ENCODE measurements at regions of chr3 and their contacts with region 1.

Region 1: DNA sequence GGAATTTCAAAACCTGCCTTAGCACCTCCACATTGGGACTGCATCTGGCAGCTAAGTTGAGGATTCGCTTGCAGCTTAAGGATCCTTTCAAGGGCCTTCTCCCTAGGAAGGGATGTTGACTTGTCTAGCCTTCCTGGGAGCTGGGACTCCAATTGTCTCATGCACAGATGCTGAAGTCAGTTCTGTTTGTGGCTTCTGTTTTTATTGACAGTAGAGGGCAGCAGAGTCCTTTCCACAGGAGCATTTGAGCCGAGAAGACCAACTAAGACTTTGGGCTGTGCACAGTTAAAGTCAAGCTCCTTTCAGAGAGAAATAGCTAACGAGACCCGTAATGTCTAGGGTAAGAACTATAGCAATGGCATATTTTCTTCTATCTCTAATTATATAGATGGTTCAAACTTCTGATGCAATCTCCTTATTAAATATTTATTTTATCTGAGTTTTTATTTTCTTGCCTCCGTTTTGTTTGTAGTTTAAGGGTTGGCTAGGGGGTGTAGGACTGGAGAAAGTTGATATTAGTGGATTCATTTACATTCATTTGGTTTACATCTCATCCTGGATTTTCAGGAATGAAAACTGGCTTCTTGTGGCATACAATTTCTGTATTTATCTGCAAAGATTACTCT is 59.7 kb upstream of the KBTBD8 start:
- DNase-seq: peak; percentile 48
- H3K4me3 Mint-ChIP-seq: no peak overlapping the region
- H3K27ac Mint-ChIP-seq: no peak overlapping the region
- H3K4me1 Mint-ChIP-seq: no peaks in the 10 kb centered on the region
- H3K27me3 Mint-ChIP-seq: peaks cover 7% of the 10 kb centered on the region

Region 2: GRCh38 chr3:65575373-65575840 is 1363.0 kb before region 1 on chr3:
- CTCF ChIA-PET with region 1: no interaction called
- intact Hi-C with region 1: no loop called
- DNase-seq: no peak
- H3K4me3 Mint-ChIP-seq: no peak overlapping the region
- H3K27ac Mint-ChIP-seq: no peak overlapping the region
- H3K4me1 Mint-ChIP-seq: no peaks in the 10 kb centered on the region
- H3K27me3 Mint-ChIP-seq: no peaks in the 10 kb centered on the region

Region 3: DNA sequence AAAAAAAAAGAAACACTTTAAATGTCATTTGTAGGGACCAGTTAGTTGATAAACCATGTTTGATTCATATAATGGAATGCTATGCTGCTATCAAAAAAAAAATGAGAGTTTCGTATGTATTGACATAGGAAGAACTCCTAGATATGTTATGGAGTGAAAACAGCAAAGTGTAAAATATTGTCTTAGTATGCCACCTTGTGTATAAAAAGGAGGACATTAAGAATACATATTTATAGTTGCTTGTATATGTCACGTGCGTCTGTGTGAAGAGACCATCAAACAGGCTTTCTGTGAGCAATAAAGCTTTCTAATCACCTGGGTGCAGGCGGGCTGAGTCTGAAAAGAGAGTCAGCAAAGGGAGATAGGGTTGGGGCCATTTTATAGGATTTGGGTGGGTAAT is 99.2 kb after region 1 on chr3:
- CTCF ChIA-PET with region 1: interaction called, 6 read pairs
- intact Hi-C with region 1: loop called (anchors 1 kb)
- DNase-seq: no peak
- H3K4me3 Mint-ChIP-seq: no peak overlapping the region
- H3K27ac Mint-ChIP-seq: no peak overlapping the region
- H3K4me1 Mint-ChIP-seq: no peaks in the 10 kb centered on the region
- H3K27me3 Mint-ChIP-seq: no peaks in the 10 kb centered on the region

Measured in activated naive CD4-positive, alpha-beta T cell treated with anti-CD3 and anti-CD28 coated beads for 36 hours (primary cell).